ENCODE measurements at regions of chr2 and their contacts with region 1.

Region 1: DNA sequence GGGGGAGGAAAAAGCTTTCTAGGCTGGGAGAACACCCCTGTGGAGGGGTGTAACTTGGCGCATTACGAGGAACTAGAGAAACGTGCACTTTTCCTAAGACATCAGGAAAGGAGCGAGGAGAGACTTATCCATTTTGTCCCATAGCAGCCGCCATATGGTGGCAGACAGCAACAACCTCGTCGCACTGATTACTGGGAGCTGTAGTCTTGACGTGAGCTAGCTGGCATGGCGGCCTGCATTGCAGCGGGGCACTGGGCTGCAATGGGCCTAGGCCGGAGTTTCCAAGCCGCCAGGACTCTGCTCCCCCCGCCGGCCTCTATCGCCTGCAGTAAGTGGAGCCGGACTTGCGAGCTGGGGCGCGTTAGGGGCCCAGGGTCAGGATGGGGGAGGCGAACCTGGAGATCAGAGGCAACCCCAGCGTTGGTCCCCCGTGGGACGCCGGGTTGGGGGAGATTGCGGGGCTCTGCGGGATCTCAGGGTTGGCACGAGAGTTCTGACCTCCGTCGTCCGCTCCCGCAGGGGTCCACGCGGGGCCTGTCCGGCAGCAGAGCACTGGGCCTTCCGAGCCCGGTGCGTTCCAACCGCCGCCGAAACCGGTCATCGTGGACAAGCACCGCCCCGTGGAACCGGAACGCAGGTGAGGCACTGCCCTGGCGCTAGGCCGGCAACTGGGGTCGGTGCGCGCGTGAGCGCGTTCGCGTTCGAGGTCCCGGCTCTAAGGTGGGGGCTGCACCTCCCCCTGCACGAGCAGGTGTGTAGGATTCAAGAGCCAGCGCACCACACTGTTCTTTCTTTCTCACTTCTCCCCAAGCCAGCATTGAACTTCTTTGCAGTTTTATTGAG is at the start of gene MRPL19:
- DNase-seq: peak; percentile 48 to 90 (median 75)
- ATAC-seq: peak; percentile 96
- H3K4me3 ChIP-seq: peak within 1 kb of the TSS; percentile 79 to 94
- H3K4me3 Mint-ChIP-seq: peak within 1 kb of the TSS; percentile 96
- H3K27ac ChIP-seq: peak within 1 kb of the TSS; percentile 60 to 63
- H3K27ac Mint-ChIP-seq: peak within 1 kb of the TSS; percentile 94
- H3K4me1 ChIP-seq: peaks cover 10% of the 10 kb centered on the region
- H3K4me1 Mint-ChIP-seq: peaks cover 42% of the 10 kb centered on the region
- H3K27me3 ChIP-seq: no peaks in the 10 kb centered on the region
- H3K27me3 Mint-ChIP-seq: no peaks in the 10 kb centered on the region
- CTCF ChIP-seq: no peak
- total RNA-seq, gene MRPL19: 17.2 to 18.1 TPM

Region 2: GRCh38 chr2:75592028-75592427 is 54.8 kb before region 1 on chr2:
- CTCF ChIA-PET with region 1: no interaction called
- POLR2A ChIA-PET with region 1: no interaction called
- intact Hi-C with region 1: no loop called
- DNase-seq: no peak
- ATAC-seq: no peak
- H3K4me3 ChIP-seq: no peak overlapping the region
- H3K4me3 Mint-ChIP-seq: no peak overlapping the region
- H3K27ac ChIP-seq: no peak overlapping the region
- H3K27ac Mint-ChIP-seq: no peak overlapping the region
- H3K4me1 ChIP-seq: no peaks in the 10 kb centered on the region
- H3K4me1 Mint-ChIP-seq: no peaks in the 10 kb centered on the region
- H3K27me3 ChIP-seq: no peaks in the 10 kb centered on the region
- H3K27me3 Mint-ChIP-seq: peaks cover 5% of the 10 kb centered on the region
- CTCF ChIP-seq: no peak

Region 3: GRCh38 chr2:75676464-75676863 is 29.7 kb after region 1 on chr2:
- CTCF ChIA-PET with region 1: interaction called, 38 read pairs
- POLR2A ChIA-PET with region 1: no interaction called
- intact Hi-C with region 1: no loop called
- DNase-seq: no peak
- ATAC-seq: no peak
- H3K4me3 ChIP-seq: no peak overlapping the region
- H3K4me3 Mint-ChIP-seq: no peak overlapping the region
- H3K27ac ChIP-seq: no peak overlapping the region
- H3K27ac Mint-ChIP-seq: no peak overlapping the region
- H3K4me1 ChIP-seq: no peaks in the 10 kb centered on the region
- H3K4me1 Mint-ChIP-seq: peaks cover 6% of the 10 kb centered on the region
- H3K27me3 ChIP-seq: no peaks in the 10 kb centered on the region
- H3K27me3 Mint-ChIP-seq: no peaks in the 10 kb centered on the region
- CTCF ChIP-seq: no peak

Region 4: DNA sequence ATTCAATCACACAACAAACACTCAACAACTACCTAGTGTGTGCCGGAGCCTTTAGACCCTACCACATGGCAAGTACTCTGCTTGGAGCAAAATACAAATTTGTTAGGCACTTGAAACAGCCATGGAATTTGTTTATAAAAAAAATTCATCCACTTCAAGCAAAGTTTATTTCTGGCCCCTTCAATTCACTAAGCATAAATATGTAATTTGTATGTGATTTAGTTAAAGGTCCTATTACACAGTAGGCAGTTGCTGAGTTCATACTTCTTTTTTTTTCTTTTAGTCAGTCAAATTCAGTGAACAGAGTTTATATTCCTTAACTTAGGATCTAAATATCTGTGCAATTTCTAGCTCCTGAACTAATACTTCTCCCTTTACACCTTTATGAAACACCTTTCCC is 41.4 kb after region 1 on chr2:
- CTCF ChIA-PET with region 1: no interaction called
- POLR2A ChIA-PET with region 1: no interaction called
- intact Hi-C with region 1: loop called in 1 of 2 experiments (anchors 1 kb)
- DNase-seq: no peak
- ATAC-seq: no peak
- H3K4me3 ChIP-seq: no peak overlapping the region
- H3K4me3 Mint-ChIP-seq: no peak overlapping the region
- H3K27ac ChIP-seq: no peak overlapping the region
- H3K27ac Mint-ChIP-seq: no peak overlapping the region
- H3K4me1 ChIP-seq: no peaks in the 10 kb centered on the region
- H3K4me1 Mint-ChIP-seq: peaks cover 8% of the 10 kb centered on the region
- H3K27me3 ChIP-seq: no peaks in the 10 kb centered on the region
- H3K27me3 Mint-ChIP-seq: no peaks in the 10 kb centered on the region
- CTCF ChIP-seq: no peak

Region 5: DNA sequence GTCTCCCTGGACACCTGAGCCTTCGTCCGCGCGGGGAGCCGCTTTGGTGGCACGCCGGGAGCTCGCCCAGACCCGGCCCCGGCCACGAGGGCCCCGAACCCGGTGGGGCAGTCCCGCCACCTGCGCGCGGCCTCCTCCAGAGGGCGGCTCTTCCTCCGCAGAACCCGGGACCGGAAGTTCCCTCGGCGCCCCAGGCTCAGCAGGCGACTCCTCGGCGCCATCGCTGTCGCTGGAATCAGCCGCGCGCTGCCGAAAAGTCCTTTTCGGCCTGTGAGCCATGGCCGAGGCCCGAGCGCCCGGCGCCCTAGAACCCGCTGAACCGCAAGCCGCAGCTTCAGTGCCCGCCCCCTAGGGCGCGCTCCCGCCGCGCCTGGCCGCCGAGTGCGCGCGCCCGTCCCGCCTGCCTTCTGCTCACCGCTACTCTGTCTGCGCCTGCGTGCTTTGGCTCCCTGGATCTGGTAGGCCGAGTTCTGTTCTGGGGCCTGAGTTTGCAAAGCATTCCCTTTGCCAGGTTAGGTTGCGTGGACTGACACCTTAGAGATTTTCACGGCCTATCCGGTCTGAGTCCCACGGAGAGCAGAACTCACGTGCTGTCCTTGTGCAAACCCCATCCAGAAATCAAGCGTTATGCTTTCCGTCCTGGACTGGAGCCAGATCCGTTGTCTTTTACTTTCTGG is 63.9 kb after region 1 on chr2 and contains the start of gene GCFC2:
- CTCF ChIA-PET with region 1: interaction called, 3 read pairs
- POLR2A ChIA-PET with region 1: interaction called, 22 read pairs
- intact Hi-C with region 1: loop called (anchors 1 to 2 kb)
- DNase-seq: peak; percentile 59 to 91 (median 80)
- ATAC-seq: peak; percentile 88
- H3K4me3 ChIP-seq: peak within 1 kb of the TSS; percentile 56 to 59
- H3K4me3 Mint-ChIP-seq: peak within 1 kb of the TSS; percentile 95
- H3K27ac ChIP-seq: peak within 1 kb of the TSS; percentile 74 to 80
- H3K27ac Mint-ChIP-seq: peak within 1 kb of the TSS; percentile 98
- H3K4me1 ChIP-seq: peaks cover 21% of the 10 kb centered on the region
- H3K4me1 Mint-ChIP-seq: peaks cover 34% of the 10 kb centered on the region
- H3K27me3 ChIP-seq: no peaks in the 10 kb centered on the region
- H3K27me3 Mint-ChIP-seq: no peaks in the 10 kb centered on the region
- CTCF ChIP-seq: peak; percentile 27
- total RNA-seq, gene GCFC2: 14.4 to 17.8 TPM

Measured in CD8-positive, alpha-beta T cell (primary cell).